GM12878 (cell line): ENCODE measurements at regions of chrX and their contacts with region 1.

Region 1: GRCh38 chrX:22056235-22056634 is 24.1 kb downstream of the PHEX start:
- DNase-seq: no peak
- ATAC-seq: peak; percentile 43
- H3K4me3 ChIP-seq: no peak overlapping the region
- H3K27ac ChIP-seq: no peak overlapping the region
- H3K4me1 ChIP-seq: peaks cover 13% of the 10 kb centered on the region
- H3K27me3 ChIP-seq: no peaks in the 10 kb centered on the region
- CTCF ChIP-seq: no peak
- EP300 ChIP-seq: no peak
- POLR2A ChIP-seq: no peak
- RAD21 ChIP-seq: no peak

Region 2: DNA sequence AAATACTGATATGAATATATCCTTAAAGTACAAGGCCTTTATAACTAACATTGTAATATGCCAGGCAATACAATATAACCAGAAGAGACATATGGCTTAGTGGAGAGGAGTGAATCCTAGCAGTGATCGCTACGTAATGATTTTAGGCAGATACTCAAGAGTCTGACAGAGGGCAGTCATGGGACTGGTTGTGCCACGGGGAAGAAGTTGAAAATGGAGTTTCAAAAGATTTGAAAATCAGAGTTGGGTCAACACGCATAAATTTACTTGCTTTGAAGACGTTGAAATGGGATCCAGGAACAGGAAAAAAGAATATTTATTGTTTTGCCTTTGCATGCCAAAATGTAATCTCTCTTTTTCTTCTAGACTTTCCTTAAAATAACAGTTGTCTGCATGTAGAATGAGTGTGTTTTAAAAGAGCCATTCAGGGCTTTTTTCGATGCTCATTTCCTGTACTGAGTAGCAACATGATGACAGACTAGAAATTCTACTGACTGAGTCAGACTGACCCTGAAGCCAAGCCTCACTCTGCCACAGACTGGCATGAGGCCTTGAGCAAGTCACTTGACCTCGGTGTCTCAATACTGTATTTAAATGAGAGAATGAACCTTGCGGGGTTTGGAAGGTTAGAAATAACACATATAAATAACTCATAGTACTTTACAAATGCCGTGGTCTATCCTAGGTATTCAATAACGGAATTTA is 123.8 kb before region 1 on chrX:
- CTCF ChIA-PET with region 1: no interaction called
- POLR2A ChIA-PET with region 1: no interaction called
- RAD21 ChIA-PET with region 1: no interaction called
- SMC1A ChIA-PET with region 1: no interaction called
- in situ Hi-C with region 1: no loop called
- intact Hi-C with region 1: no loop called
- DNase-seq: no peak
- ATAC-seq: no peak
- H3K4me3 ChIP-seq: no peak overlapping the region
- H3K27ac ChIP-seq: no peak overlapping the region
- H3K4me1 ChIP-seq: no peaks in the 10 kb centered on the region
- H3K27me3 ChIP-seq: no peaks in the 10 kb centered on the region
- CTCF ChIP-seq: no peak
- EP300 ChIP-seq: no peak
- POLR2A ChIP-seq: no peak
- RAD21 ChIP-seq: no peak

Region 3: DNA sequence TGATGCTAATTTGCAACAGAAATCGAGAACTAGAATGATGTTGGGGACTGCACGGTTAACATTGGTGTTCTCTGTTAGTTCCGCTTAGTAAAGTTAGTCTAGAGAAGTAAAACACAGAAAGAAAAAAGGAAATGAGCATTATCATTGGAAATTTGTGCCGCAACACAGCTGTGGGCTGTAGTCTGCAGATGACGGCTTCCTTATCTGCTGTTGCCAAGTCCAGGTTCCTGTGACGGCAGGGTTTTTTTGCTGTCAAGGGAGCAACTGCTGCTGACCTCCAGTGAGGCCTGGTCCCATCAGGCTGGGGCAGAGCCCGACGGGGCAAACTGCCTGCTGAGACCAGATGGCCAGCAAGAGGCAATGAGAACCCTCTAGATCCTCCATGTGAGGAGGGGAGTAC is 63.0 kb before region 1 on chrX:
- CTCF ChIA-PET with region 1: interaction called, 10 read pairs
- POLR2A ChIA-PET with region 1: interaction called, 23 read pairs
- RAD21 ChIA-PET with region 1: interaction called, 24 read pairs
- SMC1A ChIA-PET with region 1: interaction called, 54 read pairs
- in situ Hi-C with region 1: no loop called
- intact Hi-C with region 1: no loop called
- DNase-seq: peak; percentile 30
- ATAC-seq: peak; percentile 36
- H3K4me3 ChIP-seq: no peak overlapping the region
- H3K27ac ChIP-seq: peak overlapping the region; percentile 62
- H3K4me1 ChIP-seq: peaks cover 16% of the 10 kb centered on the region
- H3K27me3 ChIP-seq: no peaks in the 10 kb centered on the region
- CTCF ChIP-seq: no peak
- EP300 ChIP-seq: no peak; a peak in 1 of 4 replicates
- POLR2A ChIP-seq: no peak
- RAD21 ChIP-seq: no peak

Region 4: GRCh38 chrX:22041907-22042530 is 14.2 kb before region 1 on chrX:
- CTCF ChIA-PET with region 1: interaction called, 6 read pairs
- POLR2A ChIA-PET with region 1: interaction called, 7 read pairs
- RAD21 ChIA-PET with region 1: interaction called, 9 read pairs
- SMC1A ChIA-PET with region 1: interaction called, 16 read pairs
- in situ Hi-C with region 1: no loop called
- intact Hi-C with region 1: no loop called
- DNase-seq: no peak
- ATAC-seq: peak; percentile 13
- H3K4me3 ChIP-seq: no peak overlapping the region
- H3K27ac ChIP-seq: no peak overlapping the region
- H3K4me1 ChIP-seq: no peaks in the 10 kb centered on the region
- H3K27me3 ChIP-seq: no peaks in the 10 kb centered on the region
- CTCF ChIP-seq: no peak
- EP300 ChIP-seq: no peak
- POLR2A ChIP-seq: no peak
- RAD21 ChIP-seq: no peak

Region 5: DNA sequence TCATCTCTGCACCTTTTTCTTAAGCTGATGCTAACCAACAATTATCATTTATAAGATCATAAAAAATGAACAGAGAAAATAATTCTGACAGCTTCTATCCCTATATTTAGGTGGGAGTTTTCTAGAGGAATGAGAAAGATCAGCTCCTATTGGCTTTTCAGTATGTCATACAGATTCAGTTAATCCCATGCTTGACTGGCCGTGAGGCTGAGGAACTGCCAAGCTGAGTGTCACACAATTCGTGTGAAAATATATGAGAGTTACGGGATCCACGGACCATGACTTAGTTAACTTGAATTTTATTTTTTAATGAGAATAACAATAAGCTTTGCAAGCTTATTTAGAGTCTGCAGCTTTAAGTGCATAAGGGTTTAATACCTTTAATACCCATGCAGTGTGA is 13.4 kb after region 1 on chrX:
- CTCF ChIA-PET with region 1: interaction called, 10 read pairs
- POLR2A ChIA-PET with region 1: interaction called, 9 read pairs
- RAD21 ChIA-PET with region 1: interaction called, 19 read pairs
- SMC1A ChIA-PET with region 1: interaction called, 16 read pairs
- in situ Hi-C with region 1: no loop called
- intact Hi-C with region 1: no loop called
- DNase-seq: no peak
- ATAC-seq: peak; percentile 21; the same call in 1 of the 3 replicates
- H3K4me3 ChIP-seq: no peak overlapping the region
- H3K27ac ChIP-seq: no peak overlapping the region
- H3K4me1 ChIP-seq: no peaks in the 10 kb centered on the region
- H3K27me3 ChIP-seq: no peaks in the 10 kb centered on the region
- CTCF ChIP-seq: no peak
- EP300 ChIP-seq: no peak
- POLR2A ChIP-seq: no peak
- RAD21 ChIP-seq: no peak

Region 6: DNA sequence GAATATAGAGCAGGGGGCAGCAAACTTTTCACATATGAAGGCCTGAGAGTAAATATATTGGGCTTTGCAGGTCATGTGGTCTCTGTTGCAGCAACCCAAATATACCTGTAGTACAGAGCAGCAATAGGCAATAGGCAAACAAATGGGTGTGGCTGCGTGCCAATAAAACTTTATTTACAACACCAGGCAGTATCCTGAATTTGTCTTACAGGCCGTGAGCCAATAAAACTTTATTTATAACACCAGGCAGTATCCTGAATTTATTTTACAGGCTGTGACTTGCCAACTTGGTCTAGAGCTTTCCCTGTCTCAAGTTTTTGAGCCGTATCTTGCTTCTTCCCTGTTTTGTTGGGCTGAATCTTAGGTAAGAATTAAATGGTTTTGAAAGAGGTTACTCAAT is 94.1 kb after region 1 on chrX:
- CTCF ChIA-PET with region 1: no interaction called
- POLR2A ChIA-PET with region 1: no interaction called
- RAD21 ChIA-PET with region 1: no interaction called
- SMC1A ChIA-PET with region 1: no interaction called
- in situ Hi-C with region 1: no loop called
- intact Hi-C with region 1: no loop called
- DNase-seq: no peak
- ATAC-seq: no peak
- H3K4me3 ChIP-seq: no peak overlapping the region
- H3K27ac ChIP-seq: no peak overlapping the region
- H3K4me1 ChIP-seq: no peaks in the 10 kb centered on the region
- H3K27me3 ChIP-seq: no peaks in the 10 kb centered on the region
- CTCF ChIP-seq: no peak
- EP300 ChIP-seq: no peak
- POLR2A ChIP-seq: no peak
- RAD21 ChIP-seq: no peak

Region 7: GRCh38 chrX:22177950-22178515 is 121.8 kb after region 1 on chrX:
- CTCF ChIA-PET with region 1: no interaction called
- POLR2A ChIA-PET with region 1: no interaction called
- RAD21 ChIA-PET with region 1: no interaction called
- SMC1A ChIA-PET with region 1: no interaction called
- in situ Hi-C with region 1: no loop called
- intact Hi-C with region 1: no loop called
- DNase-seq: no peak
- ATAC-seq: peak; percentile 52
- H3K4me3 ChIP-seq: no peak overlapping the region
- H3K27ac ChIP-seq: no peak overlapping the region
- H3K4me1 ChIP-seq: no peaks in the 10 kb centered on the region
- H3K27me3 ChIP-seq: no peaks in the 10 kb centered on the region
- CTCF ChIP-seq: no peak
- EP300 ChIP-seq: no peak
- POLR2A ChIP-seq: no peak
- RAD21 ChIP-seq: no peak